ENCODE measurements at regions of chr16 and their contacts with region 1.

Region 1: GRCh38 chr16:78607486-78607885 is 508.0 kb downstream of the WWOX start:
- DNase-seq: no peak
- ATAC-seq: no peak
- H3K4me3 ChIP-seq: no peak overlapping the region
- H3K27ac ChIP-seq: no peak overlapping the region
- H3K4me1 ChIP-seq: no peaks in the 10 kb centered on the region
- H3K27me3 ChIP-seq: peaks cover 5 to 8% of the 10 kb centered on the region in 2 experiments; a peak in 4 of 5 replicates
- CTCF ChIP-seq: no peak
- EP300 ChIP-seq: no peak
- POLR2A ChIP-seq: no peak
- RAD21 ChIP-seq: no peak

Region 2: GRCh38 chr16:78503602-78504001 is 103.9 kb before region 1 on chr16:
- CTCF ChIA-PET with region 1: no interaction called
- POLR2A ChIA-PET with region 1: interaction called, 3 read pairs
- in situ Hi-C with region 1: no loop called
- intact Hi-C with region 1: loop called (anchors 2 kb)
- DNase-seq: peak; percentile 52 to 74 (median 70)
- ATAC-seq: peak; percentile 70
- H3K4me3 ChIP-seq: no peak overlapping the region
- H3K27ac ChIP-seq: no peak overlapping the region
- H3K4me1 ChIP-seq: no peaks in the 10 kb centered on the region
- H3K27me3 ChIP-seq: peaks cover 23 to 42% of the 10 kb centered on the region in 2 experiments
- CTCF ChIP-seq: peak; percentile 61 to 74 (median 72); a peak in 5 of 6 replicates
- EP300 ChIP-seq: no peak
- POLR2A ChIP-seq: no peak
- RAD21 ChIP-seq: peak; percentile 57 to 61

Measured in K562 (cell line).